ENCODE measurements at regions of chr1 and their contacts with region 1.

Region 1: GRCh38 chr1:155244368-155245162 is 10.7 kb downstream of the ENTREP3 start:
- DNase-seq: peak; percentile 98
- H3K4me3 Mint-ChIP-seq: peak overlapping the region; percentile 76
- H3K27ac Mint-ChIP-seq: peak overlapping the region; percentile 90
- H3K4me1 Mint-ChIP-seq: peaks cover 45% of the 10 kb centered on the region
- H3K27me3 Mint-ChIP-seq: peaks cover 2% of the 10 kb centered on the region

Region 2: GRCh38 chr1:154911691-154912550 is 332.6 kb before region 1 on chr1:
- CTCF ChIA-PET with region 1: no interaction called
- POLR2A ChIA-PET with region 1: no interaction called
- intact Hi-C with region 1: no loop called
- DNase-seq: no peak
- H3K4me3 Mint-ChIP-seq: no peak overlapping the region
- H3K27ac Mint-ChIP-seq: no peak overlapping the region
- H3K4me1 Mint-ChIP-seq: peaks cover 2% of the 10 kb centered on the region
- H3K27me3 Mint-ChIP-seq: no peaks in the 10 kb centered on the region

Region 3: DNA sequence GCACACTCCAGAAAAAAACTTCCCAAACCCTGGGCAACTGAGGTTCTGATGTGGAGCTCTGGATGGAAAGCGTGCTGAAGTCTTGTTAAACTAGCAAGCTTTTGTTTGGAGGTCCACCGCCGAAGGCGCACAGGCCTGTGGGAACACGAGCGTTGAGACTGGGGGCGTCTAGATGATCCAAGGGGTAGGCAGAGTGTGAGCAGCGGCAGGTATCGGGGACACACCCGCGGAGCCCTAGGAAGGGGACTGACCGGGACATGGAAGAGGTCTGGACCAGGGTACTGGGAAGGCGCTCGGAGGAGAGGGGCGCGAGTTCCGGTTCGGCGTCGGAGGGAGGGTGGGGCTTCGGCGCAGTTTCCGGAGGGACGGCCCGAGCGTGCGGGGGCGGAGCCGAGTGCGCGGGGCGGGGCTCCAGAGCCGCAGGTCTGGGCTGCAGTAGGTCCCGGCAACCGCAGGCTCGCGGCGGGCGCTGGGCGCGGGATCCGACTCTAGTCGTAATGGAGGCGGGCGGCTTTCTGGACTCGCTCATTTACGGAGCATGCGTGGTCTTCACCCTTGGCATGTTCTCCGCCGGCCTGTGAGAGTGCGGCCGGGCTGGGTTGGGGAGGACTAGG is 109.0 kb before region 1 on chr1 and contains the start of gene SLC50A1:
- CTCF ChIA-PET with region 1: interaction called, 4 read pairs
- POLR2A ChIA-PET with region 1: no interaction called
- intact Hi-C with region 1: loop called (anchors 5 kb)
- DNase-seq: peak; percentile 96
- H3K4me3 Mint-ChIP-seq: peak within 1 kb of the TSS; percentile 91
- H3K27ac Mint-ChIP-seq: peak within 1 kb of the TSS; percentile 94
- H3K4me1 Mint-ChIP-seq: peaks cover 35% of the 10 kb centered on the region
- H3K27me3 Mint-ChIP-seq: no peaks in the 10 kb centered on the region
- total RNA-seq, gene SLC50A1: 60.1 TPM

Region 4: DNA sequence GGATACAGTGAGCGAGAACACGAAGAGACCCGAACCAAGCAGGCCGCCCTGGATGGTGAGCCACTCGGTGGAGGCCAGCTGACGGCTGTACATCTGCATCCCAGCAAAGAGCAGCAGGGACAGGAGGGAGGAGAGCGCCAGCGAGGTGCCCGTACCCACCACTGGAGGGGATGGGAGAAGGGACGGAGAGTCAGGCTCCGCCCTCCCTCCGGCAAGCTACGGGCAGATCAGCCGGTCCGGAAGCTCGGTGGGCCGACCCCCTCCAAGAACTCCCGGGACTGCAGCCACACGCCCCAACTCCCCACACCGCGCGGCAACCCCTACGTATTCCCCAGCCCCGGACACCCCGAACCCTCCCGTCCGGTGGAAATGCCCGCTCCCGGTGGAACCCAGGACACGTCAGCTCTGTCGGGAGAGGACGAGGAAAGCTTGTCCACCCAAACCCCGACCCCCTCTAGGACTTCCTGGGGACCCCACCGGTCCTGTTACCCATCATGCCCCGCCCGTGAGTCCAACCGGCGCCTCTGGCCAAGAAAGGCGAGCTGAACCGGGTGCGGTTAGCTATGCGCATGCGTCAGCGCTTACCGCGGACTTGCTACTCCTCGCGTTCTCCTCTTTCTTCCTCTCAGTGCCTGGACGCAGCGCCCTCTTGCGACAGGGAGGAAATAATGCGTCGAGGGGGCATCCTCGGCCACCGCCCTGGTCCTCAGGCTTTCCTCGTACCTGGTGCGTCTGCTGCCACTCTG is 71.7 kb before region 1 on chr1 and contains the start of gene KRTCAP2:
- CTCF ChIA-PET with region 1: interaction called, 3 read pairs
- POLR2A ChIA-PET with region 1: interaction called, 5 read pairs
- intact Hi-C with region 1: loop called (anchors 5 kb)
- DNase-seq: peak; percentile 98
- H3K4me3 Mint-ChIP-seq: peak within 1 kb of the TSS; percentile 93
- H3K27ac Mint-ChIP-seq: peak within 1 kb of the TSS; percentile 96
- H3K4me1 Mint-ChIP-seq: peaks cover 48% of the 10 kb centered on the region
- H3K27me3 Mint-ChIP-seq: no peaks in the 10 kb centered on the region
- total RNA-seq, gene KRTCAP2: 138 to 146 TPM

Region 5: DNA sequence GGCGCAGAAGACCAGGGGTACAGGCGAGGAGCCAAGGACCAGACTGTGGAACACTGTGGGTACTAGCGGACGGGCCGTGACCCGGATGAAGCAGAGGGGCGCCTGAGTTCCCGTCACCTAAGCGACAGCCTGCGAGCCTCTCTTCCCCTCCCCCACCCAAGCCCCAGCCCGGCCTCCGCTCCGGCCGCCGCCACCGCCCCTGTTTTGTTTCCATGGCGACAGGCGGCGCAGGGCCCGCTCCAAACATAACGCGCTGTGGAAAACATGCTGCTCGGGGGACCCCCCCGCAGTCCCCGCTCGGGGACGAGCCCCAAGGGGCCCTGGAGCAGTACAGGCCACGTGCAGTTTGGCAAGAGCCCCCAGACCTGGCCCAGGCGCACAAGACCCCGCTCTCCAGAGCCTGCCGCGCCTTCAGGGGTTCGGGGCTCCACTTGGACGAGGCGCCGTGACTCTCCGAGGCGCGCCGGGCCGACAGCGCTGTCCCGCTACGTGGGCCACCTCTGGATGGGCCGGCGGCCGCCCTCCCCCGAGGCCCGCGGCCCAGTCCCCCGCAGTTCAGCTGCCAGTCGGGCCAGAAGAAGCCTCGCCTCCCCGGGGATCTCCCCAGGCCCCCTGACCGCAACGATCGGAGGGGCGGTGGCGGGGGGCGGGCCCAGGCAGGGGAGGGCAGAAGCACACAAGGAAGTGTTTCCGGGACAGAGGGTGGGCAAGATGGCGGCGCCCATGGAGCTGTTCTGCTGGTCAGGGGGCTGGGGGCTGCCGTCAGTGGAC is 35.8 kb before region 1 on chr1 and contains the start of gene MTX1:
- CTCF ChIA-PET with region 1: interaction called, 52 read pairs
- POLR2A ChIA-PET with region 1: interaction called, 3 read pairs
- intact Hi-C with region 1: loop called (anchors 1 kb)
- DNase-seq: peak; percentile 92
- H3K4me3 Mint-ChIP-seq: peak within 1 kb of the TSS; percentile 83
- H3K27ac Mint-ChIP-seq: peak within 1 kb of the TSS; percentile 89
- H3K4me1 Mint-ChIP-seq: peaks cover 29% of the 10 kb centered on the region
- H3K27me3 Mint-ChIP-seq: no peaks in the 10 kb centered on the region
- total RNA-seq, gene MTX1: 45.2 to 47.9 TPM

Region 6: DNA sequence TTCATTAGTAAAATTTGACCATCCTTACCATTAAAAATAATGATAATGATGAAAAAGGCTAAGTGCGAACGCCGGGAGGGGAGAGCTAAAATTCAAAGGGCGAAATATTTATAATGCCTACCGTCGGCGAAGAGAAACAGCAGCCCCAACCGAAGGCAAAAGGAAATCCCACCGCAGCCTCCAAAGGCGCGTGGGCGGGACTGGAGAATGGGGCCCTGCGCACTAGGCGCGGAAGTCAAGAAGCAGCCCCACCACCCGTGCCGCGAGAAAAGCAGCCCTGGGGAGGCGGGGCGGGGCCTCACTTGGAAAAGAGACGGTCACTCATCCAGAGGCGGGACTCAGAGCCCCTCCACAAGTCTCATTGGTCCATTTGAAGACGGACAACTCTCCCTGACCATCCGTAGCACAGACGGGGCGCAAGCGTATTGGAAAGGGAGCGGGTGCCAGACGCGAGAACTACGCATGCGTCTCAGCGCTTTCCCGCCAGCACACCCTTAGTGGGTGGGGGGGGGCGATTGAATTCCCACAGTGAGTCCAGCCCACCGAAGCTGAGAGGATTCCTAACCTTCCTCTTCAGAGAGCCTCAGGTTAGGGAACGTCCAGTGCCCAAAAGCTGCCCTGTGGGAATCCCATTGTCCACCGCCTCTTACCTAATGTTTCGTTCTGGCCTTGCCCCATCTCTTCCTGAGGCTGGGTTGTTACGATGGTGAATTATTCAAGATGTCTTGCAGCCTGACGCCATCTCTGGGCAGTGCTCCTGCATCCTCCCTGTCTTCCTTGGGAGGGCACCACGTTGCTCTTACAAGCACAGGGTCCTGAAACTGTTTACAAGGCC is 17.1 kb before region 1 on chr1:
- CTCF ChIA-PET with region 1: interaction called, 5 read pairs
- POLR2A ChIA-PET with region 1: interaction called, 11 read pairs
- intact Hi-C with region 1: loop called (anchors 1 kb)
- DNase-seq: peak; percentile 100
- H3K4me3 Mint-ChIP-seq: peak overlapping the region; percentile 89
- H3K27ac Mint-ChIP-seq: peak overlapping the region; percentile 98
- H3K4me1 Mint-ChIP-seq: peaks cover 26% of the 10 kb centered on the region
- H3K27me3 Mint-ChIP-seq: no peaks in the 10 kb centered on the region

Region 7: DNA sequence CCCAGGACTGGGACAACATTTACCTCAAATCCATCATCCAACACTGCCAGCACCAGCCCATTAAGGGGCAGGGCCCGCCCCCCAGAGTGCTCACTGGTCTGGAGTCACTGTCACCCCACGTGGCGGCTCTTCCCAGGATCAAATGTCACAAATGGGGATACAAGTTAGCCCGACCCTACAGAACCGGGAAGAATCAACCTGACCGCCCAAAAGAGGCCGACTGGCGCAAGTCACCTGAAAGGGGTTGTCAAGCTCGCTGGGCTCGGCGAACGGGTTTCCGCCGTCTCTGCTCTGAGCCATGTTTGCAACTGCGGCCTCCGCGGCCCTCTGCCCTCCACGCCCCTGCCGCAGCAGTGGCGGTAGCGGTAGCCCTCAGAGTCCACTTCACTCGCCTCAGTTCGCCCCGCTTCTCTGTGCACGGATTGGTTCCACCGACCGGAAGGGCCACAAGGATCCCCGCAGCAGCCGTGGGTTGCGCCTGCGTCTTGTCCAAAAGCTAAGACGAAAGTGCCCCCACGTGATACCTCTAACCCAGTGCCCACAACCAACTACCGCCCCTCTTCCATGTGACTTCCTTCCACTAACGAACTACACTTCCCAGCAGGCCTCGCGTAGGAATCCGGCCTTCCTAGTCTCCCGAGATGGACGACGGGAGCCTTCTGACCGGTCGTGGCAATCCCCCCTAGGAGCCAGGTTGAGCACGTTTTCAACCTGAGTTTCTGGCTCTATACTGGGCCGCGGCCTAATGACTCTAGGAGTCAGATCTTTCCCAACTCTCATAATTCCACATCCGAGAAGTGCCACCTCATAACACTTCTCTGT is 17.5 kb after region 1 on chr1 and contains the start of gene SCAMP3:
- CTCF ChIA-PET with region 1: interaction called, 90 read pairs
- POLR2A ChIA-PET with region 1: interaction called, 4 read pairs
- intact Hi-C with region 1: loop called (anchors 1 kb)
- DNase-seq: peak; percentile 94
- H3K4me3 Mint-ChIP-seq: peak within 1 kb of the TSS; percentile 98
- H3K27ac Mint-ChIP-seq: peak within 1 kb of the TSS; percentile 88
- H3K4me1 Mint-ChIP-seq: peaks cover 24% of the 10 kb centered on the region
- H3K27me3 Mint-ChIP-seq: no peaks in the 10 kb centered on the region
- total RNA-seq, gene SCAMP3: 89.6 to 91.7 TPM

Region 8: DNA sequence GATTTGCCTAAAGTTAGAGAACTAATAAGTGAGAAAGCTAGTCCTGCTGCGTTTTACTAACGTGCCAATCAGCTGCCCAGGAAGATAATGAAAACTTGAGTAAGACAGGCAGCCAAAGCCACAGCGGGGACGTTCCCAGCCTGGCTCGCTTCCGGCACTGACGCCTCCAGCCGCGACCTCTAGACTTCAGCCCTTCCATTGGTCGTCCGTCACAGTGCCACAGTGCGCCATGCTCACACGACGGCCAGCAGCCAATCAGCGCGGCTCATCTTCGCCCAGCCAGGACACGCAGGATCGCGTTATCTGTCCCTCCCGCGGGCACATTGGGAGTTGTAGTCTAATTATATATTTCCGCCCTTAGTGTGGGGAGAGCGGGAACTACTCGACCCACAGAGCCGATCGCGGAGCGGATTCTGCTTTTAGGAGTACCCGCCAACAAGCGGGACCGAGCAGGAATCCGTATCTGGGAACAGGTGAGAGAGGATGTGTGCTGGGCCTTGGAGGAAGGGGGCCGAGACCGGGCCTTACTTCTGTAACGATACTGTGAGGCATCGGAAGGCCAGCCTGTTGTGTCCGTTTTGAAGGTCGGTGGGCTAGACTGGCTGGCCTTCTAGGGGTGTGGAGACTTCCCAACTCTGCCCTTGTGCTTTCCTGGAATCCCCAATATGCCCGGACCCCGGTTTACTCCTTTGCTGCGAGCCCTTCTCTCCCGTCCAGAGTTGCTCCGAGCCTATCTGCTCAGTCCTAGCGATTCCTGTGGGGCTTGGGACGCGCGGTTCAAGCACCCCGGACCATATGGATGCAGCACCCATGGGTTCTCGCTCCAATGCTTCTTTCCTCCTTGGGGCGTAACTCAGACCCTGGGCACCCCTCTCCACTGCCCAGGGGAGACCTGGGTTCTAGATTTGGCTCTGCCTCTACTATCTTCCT is 64.2 kb after region 1 on chr1 and contains the start of gene FDPS:
- CTCF ChIA-PET with region 1: interaction called, 4 read pairs
- POLR2A ChIA-PET with region 1: interaction called, 7 read pairs
- intact Hi-C with region 1: loop called (anchors 1 kb)
- DNase-seq: peak; percentile 99
- H3K4me3 Mint-ChIP-seq: peak within 1 kb of the TSS; percentile 97
- H3K27ac Mint-ChIP-seq: peak within 1 kb of the TSS; percentile 99
- H3K4me1 Mint-ChIP-seq: peaks cover 29% of the 10 kb centered on the region
- H3K27me3 Mint-ChIP-seq: no peaks in the 10 kb centered on the region
- total RNA-seq, gene FDPS: 378 to 395 TPM